ENCODE measurements at regions of chr15 and their contacts with region 1.

Region 1: GRCh38 chr15:98856218-98856907 is 151.2 kb downstream of the PGPEP1L start:
- DNase-seq: no peak
- H3K4me3 ChIP-seq: no peak overlapping the region
- H3K27ac ChIP-seq: no peak overlapping the region
- H3K4me1 ChIP-seq: peaks cover 19 to 34% (median 27%) of the 10 kb centered on the region in 4 experiments
- H3K27me3 ChIP-seq: no peaks in the 10 kb centered on the region
- CTCF ChIP-seq: no peak
- EP300 ChIP-seq: no peak
- POLR2A ChIP-seq: no peak
- RAD21 ChIP-seq: no peak

Region 2: GRCh38 chr15:98792117-98792516 is 64.2 kb before region 1 on chr15:
- CTCF ChIA-PET with region 1: no interaction called
- POLR2A ChIA-PET with region 1: no interaction called
- DNase-seq: no peak
- H3K4me3 ChIP-seq: no peak overlapping the region
- H3K27ac ChIP-seq: no peak overlapping the region
- H3K4me1 ChIP-seq: peaks cover 12 to 43% (median 33%) of the 10 kb centered on the region in 4 experiments
- H3K27me3 ChIP-seq: no peaks in the 10 kb centered on the region
- CTCF ChIP-seq: no peak
- EP300 ChIP-seq: no peak
- POLR2A ChIP-seq: no peak
- RAD21 ChIP-seq: no peak

Region 3: DNA sequence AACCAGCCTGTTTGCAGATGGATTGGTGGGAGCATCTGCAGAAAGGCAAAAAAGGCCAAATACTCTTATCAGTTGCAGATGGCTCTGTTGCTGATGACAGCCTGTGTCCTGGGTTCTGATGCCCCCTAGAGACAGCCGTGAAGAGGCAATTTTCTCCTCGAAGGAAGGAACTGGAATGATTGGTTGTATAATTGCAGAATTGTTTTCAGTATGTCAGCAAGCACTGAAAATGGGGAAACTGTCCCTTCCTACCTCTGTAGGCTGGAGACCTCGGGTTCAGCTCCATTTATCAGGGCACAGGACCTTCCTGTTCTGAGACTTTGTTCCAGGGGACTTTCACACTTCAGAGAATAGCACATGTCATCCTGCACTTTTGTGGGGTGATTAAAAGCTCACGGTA is 48.2 kb after region 1 on chr15:
- CTCF ChIA-PET with region 1: interaction called, 14 read pairs
- POLR2A ChIA-PET with region 1: no interaction called
- DNase-seq: no peak
- H3K4me3 ChIP-seq: no peak overlapping the region
- H3K27ac ChIP-seq: no peak overlapping the region
- H3K4me1 ChIP-seq: peaks cover 6 to 16% (median 14%) of the 10 kb centered on the region in 4 experiments
- H3K27me3 ChIP-seq: no peaks in the 10 kb centered on the region
- CTCF ChIP-seq: peak; percentile 63 to 81 (median 74)
- EP300 ChIP-seq: no peak
- POLR2A ChIP-seq: no peak
- RAD21 ChIP-seq: peak; percentile 85 to 89